ENCODE measurements at regions of chr3 and their contacts with region 1.

Region 1: GRCh38 chr3:184011234-184011876 is 6.3 kb downstream of the ABCC5 start:
- DNase-seq: no peak
- H3K4me3 ChIP-seq: no peak overlapping the region
- H3K27ac ChIP-seq: no peak overlapping the region
- H3K4me1 ChIP-seq: peaks cover 2% of the 10 kb centered on the region
- H3K27me3 ChIP-seq: no peaks in the 10 kb centered on the region
- CTCF ChIP-seq: no peak

Region 2: GRCh38 chr3:183802989-183803388 is 208.4 kb before region 1 on chr3:
- intact Hi-C with region 1: no loop called
- DNase-seq: no peak
- H3K4me3 ChIP-seq: no peak overlapping the region
- H3K27ac ChIP-seq: no peak overlapping the region
- H3K4me1 ChIP-seq: no peaks in the 10 kb centered on the region
- H3K27me3 ChIP-seq: no peaks in the 10 kb centered on the region
- CTCF ChIP-seq: no peak

Region 3: GRCh38 chr3:183924956-183925355 is 86.4 kb before region 1 on chr3:
- intact Hi-C with region 1: loop called (anchors 5 kb)
- DNase-seq: no peak
- H3K4me3 ChIP-seq: no peak overlapping the region
- H3K27ac ChIP-seq: no peak overlapping the region
- H3K4me1 ChIP-seq: no peaks in the 10 kb centered on the region
- H3K27me3 ChIP-seq: no peaks in the 10 kb centered on the region
- CTCF ChIP-seq: no peak

Region 4: DNA sequence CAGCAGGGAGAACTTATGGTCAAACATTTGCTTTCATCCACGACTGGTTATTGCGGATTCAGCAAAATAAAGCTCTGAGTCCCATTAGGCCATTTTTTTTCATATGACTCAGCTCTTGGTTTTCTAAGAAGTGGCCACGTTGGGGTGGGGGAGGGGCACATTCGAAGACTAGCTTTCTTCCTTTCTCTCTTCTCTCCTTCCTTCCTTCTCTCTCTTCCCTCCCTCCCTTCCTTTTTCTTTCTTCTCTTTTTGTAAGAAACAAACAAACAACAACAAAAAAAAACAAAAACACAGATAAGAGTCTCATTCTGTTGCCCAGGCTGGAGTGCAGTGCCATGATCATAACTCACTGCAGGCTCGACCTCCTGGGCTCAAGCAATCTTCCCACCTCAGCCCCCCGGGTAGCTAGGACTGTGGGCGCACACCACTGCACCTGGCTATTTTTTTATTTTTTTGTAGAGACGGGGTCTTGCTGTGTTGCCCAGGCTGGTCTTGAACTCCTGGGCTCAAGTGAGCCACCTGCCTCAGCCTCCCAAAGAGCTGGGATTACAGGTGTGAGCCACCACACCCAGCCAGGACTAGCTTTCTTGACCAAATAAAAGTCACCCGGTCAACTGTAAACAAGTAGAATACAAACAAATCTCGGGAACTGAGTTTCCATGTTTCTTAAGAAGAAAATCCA is 35.2 kb before region 1 on chr3:
- intact Hi-C with region 1: no loop called
- DNase-seq: no peak
- H3K4me3 ChIP-seq: no peak overlapping the region
- H3K27ac ChIP-seq: no peak overlapping the region
- H3K4me1 ChIP-seq: no peaks in the 10 kb centered on the region
- H3K27me3 ChIP-seq: no peaks in the 10 kb centered on the region
- CTCF ChIP-seq: no peak

Region 5: GRCh38 chr3:184229394-184230080 is 218.2 kb after region 1 on chr3 and contains the start of gene VWA5B2:
- intact Hi-C with region 1: no loop called
- DNase-seq: peak; percentile 30
- H3K4me3 ChIP-seq: peak within 1 kb of the TSS; percentile 41
- H3K27ac ChIP-seq: no peak within 1 kb of the TSS
- H3K4me1 ChIP-seq: peaks cover 9% of the 10 kb centered on the region
- H3K27me3 ChIP-seq: peaks cover 36% of the 10 kb centered on the region
- CTCF ChIP-seq: no peak
- total RNA-seq, gene VWA5B2: 2.1 to 2.3 TPM